HCT116 (cell line): ENCODE measurements at regions of chr10 and their contacts with region 1.

Region 1: DNA sequence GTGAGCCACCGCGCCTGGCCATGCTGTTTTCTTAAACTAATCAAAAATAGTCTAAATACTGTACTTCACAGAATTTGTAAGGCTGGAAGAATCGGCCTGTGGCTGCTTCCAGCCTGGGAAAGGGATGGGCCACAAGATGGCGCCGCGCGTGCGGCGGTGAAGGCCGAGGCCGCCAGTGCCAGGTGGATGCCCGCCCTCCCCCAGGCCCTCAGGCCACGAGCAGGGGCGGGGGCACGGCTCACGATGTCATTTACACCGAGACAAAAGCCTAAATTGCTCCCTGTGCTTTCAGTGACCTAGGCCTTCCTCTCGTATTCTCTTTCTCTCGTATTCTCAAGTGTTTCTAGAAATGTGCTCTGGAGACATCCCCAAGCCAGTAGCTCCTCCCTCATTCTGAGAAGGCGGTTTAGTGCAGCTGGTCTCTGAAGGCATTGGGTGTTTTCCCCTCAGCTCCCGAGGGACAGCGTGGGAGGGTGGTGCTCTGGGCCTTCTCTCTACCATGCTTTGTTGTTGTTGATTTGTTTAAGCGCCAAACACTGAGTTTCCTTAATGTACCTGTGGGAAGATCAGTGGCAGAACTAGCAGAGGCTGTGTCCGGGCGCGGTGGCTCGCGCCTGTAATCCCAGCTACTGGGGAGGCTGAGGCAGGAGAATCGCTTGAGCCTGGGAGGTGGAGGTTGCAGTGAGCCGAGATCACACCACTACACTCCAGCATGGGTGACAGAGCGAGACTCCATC is 68.4 kb downstream of the CDC123 start:
- DNase-seq: peak; percentile 60
- ATAC-seq: peak; percentile 97
- H3K4me3 ChIP-seq: peak overlapping the region in 1 of 2 experiments; percentile 33; a peak in 2 of 4 replicates
- H3K27ac ChIP-seq: no peak overlapping the region; the same call in 1 of the 2 replicates
- H3K4me1 ChIP-seq: peaks cover 8 to 17% of the 10 kb centered on the region in 2 experiments; a peak in 3 of 4 replicates
- H3K27me3 ChIP-seq: no peaks in the 10 kb centered on the region
- CTCF ChIP-seq: peak; percentile 69 to 87 (median 69)
- POLR2A ChIP-seq: no peak
- RAD21 ChIP-seq: peak; percentile 98

Region 2: DNA sequence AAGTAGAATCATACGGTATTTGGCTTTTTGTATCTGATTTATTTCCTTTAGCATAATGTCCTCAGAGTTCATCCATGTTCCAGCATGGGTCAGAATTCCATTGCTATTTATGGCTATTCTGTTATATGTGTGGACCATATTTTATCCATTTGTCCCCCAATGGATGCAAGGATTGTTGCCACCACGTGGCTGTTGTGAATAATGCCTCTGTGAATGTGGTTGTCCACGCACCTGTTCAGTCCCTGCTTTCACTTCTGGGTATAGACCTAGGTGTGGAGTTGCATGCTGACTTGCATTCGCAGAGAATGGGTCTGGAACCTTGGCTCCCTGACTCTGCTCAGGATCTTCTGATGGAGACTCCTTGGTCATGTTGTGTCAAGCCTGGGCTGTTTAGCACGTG is 284.9 kb after region 1 on chr10:
- CTCF ChIA-PET with region 1: no interaction called
- POLR2A ChIA-PET with region 1: no interaction called
- RAD21 ChIA-PET with region 1: no interaction called
- intact Hi-C with region 1: loop called (anchors 2 kb)
- DNase-seq: peak; percentile 3
- ATAC-seq: peak; percentile 67; the same call in 1 of the 2 replicates
- H3K4me3 ChIP-seq: no peak overlapping the region
- H3K27ac ChIP-seq: no peak overlapping the region
- H3K4me1 ChIP-seq: no peaks in the 10 kb centered on the region
- H3K27me3 ChIP-seq: no peaks in the 10 kb centered on the region
- CTCF ChIP-seq: peak; percentile 21 to 41 (median 28); a peak in 3 of 6 replicates
- POLR2A ChIP-seq: no peak
- RAD21 ChIP-seq: peak; percentile 51